HepG2 (cell line): ENCODE measurements at regions of chr5 and their contacts with region 1.

Region 1: GRCh38 chr5:9544502-9545135 is 1.3 kb downstream of the SEMA5A start:
- DNase-seq: peak; percentile 35
- ATAC-seq: peak; percentile 97
- H3K4me3 ChIP-seq: no peak overlapping the region; a peak in 1 of 6 replicates
- H3K27ac ChIP-seq: no peak overlapping the region
- H3K4me1 ChIP-seq: no peaks in the 10 kb centered on the region
- H3K27me3 ChIP-seq: peaks cover 2 to 13% of the 10 kb centered on the region in 2 experiments; a peak in 4 of 5 replicates
- CTCF ChIP-seq: peak; percentile 91
- EP300 ChIP-seq: no peak
- POLR2A ChIP-seq: no peak
- RAD21 ChIP-seq: peak; percentile 51; the same call in 1 of the 2 replicates

Region 2: GRCh38 chr5:7927466-7928375 is 1616.9 kb before region 1 on chr5:
- CTCF ChIA-PET with region 1: interaction called, 5 read pairs
- POLR2A ChIA-PET with region 1: no interaction called
- in situ Hi-C with region 1: loop called (anchors 5 kb)
- intact Hi-C with region 1: loop called (anchors 2 kb)
- DNase-seq: peak; percentile 39
- ATAC-seq: peak; percentile 98
- H3K4me3 ChIP-seq: no peak overlapping the region
- H3K27ac ChIP-seq: no peak overlapping the region
- H3K4me1 ChIP-seq: no peaks in the 10 kb centered on the region
- H3K27me3 ChIP-seq: peaks cover 0 to 3% of the 10 kb centered on the region in 2 experiments; a peak in 1 of 5 replicates
- CTCF ChIP-seq: peak; percentile 90
- EP300 ChIP-seq: no peak
- POLR2A ChIP-seq: no peak
- RAD21 ChIP-seq: 0 out of 2 replicates have a peak, but pooled peaks have one; percentile 56

Region 3: GRCh38 chr5:9361835-9362234 is 182.8 kb before region 1 on chr5:
- CTCF ChIA-PET with region 1: interaction called, 4 read pairs
- POLR2A ChIA-PET with region 1: no interaction called
- in situ Hi-C with region 1: no loop called
- intact Hi-C with region 1: loop called (anchors 1 kb)
- DNase-seq: peak; percentile 54
- ATAC-seq: peak; percentile 89
- H3K4me3 ChIP-seq: no peak overlapping the region
- H3K27ac ChIP-seq: no peak overlapping the region
- H3K4me1 ChIP-seq: no peaks in the 10 kb centered on the region
- H3K27me3 ChIP-seq: no peaks in the 10 kb centered on the region; a peak in 1 of 5 replicates
- CTCF ChIP-seq: peak; percentile 74
- EP300 ChIP-seq: no peak
- POLR2A ChIP-seq: no peak
- RAD21 ChIP-seq: no peak